Tibial artery (tissue), 4 donors: ENCODE measurements at regions of chr15 and their contacts with region 1.

Region 1: GRCh38 chr15:89429023-89429422 is 67.4 kb downstream of the RHCG start:
- DNase-seq: no peak
- H3K4me3 ChIP-seq: no peak overlapping the region
- H3K27ac ChIP-seq: no peak overlapping the region
- H3K4me1 ChIP-seq: peaks cover 0 to 11% (median 4%) of the 10 kb centered on the region in 4 donors
- H3K27me3 ChIP-seq: peaks cover 0 to 33% of the 10 kb centered on the region in 2 donors
- CTCF ChIP-seq: no peak

Region 2: DNA sequence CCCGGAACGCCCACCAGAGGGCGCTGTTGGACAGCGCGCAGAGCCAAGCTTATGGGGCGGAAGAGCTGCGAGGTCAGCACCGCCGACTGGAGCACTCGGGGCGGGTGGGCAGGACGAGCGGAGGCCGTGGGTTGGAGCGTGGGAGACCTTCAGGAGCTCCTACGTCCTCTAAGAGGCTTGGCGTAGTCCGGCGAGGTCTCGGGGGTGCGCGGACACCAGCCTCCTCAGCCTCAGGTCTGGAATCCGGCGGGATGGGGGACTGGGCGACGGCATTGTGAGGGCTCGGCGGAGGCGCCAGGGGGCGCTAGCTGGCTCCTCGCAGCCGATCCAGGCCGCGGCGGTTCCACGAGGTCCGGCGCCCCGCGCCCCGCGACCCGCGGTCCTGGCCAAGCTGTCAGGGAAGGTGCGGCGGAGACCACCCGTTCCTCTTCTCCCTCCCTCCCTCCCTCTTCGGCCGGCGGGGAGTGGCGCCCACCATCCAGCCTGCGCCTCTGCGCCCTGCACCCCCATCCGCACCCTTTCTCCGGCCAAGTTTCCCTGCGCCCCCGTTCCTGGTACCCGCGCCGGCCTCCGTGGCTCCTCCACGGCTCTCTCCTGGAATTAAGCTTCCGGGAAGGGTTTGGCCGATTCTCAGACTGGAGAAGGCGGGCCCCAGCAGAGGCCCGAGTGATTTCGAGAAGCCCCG is 70.1 kb before region 1 on chr15:
- intact Hi-C with region 1: loop called (anchors 2 kb)
- DNase-seq: peak; percentile 51 to 81
- H3K4me3 ChIP-seq: peak overlapping the region; percentile 36 to 44
- H3K27ac ChIP-seq: no peak overlapping the region
- H3K4me1 ChIP-seq: peaks cover 0 to 29% (median 16%) of the 10 kb centered on the region in 4 donors
- H3K27me3 ChIP-seq: peaks cover 4 to 99% of the 10 kb centered on the region in 2 donors
- CTCF ChIP-seq: peak; percentile 96 to 99